CD8-positive, alpha-beta T cell (primary cell): ENCODE measurements at regions of chr17 and their contacts with region 1.

Region 1: DNA sequence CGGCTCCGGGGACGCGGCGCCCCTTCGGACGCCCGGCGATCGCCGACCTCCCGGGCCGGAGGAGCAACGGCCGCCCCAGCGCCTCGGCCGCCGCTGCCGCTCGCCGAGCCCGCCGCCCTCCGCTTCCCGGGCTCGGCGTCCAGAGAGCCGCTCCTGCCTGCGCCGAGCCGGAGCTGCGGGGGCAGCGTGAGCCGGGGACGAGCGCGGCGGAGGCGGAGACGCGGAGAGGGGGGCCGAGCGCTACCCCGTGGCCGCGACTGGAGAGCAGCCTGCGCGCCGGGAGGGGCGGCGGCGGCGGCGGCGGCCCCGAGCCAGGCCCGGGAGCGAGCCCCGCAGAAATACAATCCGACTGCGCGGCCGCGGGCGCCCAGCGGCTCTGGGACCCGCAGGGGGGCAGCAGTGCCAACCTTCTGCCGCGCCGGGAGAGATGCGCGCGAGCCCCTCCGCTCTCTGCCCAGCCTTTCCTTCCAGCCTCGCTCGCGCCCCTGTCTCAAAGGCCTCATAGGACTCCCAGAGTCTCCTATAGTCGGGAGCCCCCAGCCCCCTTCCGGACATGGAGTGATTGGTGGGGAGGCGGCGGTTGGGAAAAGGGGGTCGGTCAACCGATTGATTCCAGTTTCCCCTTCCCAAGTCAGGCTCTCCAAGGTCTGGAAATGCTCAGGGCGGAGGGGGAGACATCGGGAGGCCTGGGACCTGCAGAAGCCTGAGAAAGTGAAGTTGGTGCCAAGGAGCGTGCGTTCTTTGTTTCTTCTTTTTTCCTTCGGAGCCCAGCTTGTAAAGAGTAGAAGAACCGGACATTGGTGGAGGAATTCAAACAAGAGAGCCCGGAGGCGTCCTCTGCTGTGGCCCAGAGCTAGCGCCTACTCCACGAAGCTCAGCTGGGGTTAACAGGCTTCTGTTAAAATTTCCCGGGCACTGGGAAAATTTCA is 1.1 kb upstream of the SDK2 start:
- DNase-seq: peak in 7 of 9 experiments; percentile 14 to 78 (median 54)
- ATAC-seq: peak; percentile 55
- H3K4me3 ChIP-seq: peak overlapping the region in 1 of 2 experiments; percentile 27
- H3K4me3 Mint-ChIP-seq: peak overlapping the region; percentile 65
- H3K27ac ChIP-seq: no peak overlapping the region
- H3K27ac Mint-ChIP-seq: no peak overlapping the region
- H3K4me1 ChIP-seq: peaks cover 19% of the 10 kb centered on the region
- H3K4me1 Mint-ChIP-seq: peaks cover 30% of the 10 kb centered on the region
- H3K27me3 ChIP-seq: peaks cover 0 to 13% of the 10 kb centered on the region in 2 experiments
- H3K27me3 Mint-ChIP-seq: no peaks in the 10 kb centered on the region
- CTCF ChIP-seq: peak; percentile 26

Region 2: GRCh38 chr17:73710095-73710592 is 64.8 kb after region 1 on chr17:
- CTCF ChIA-PET with region 1: interaction called, 16 read pairs
- POLR2A ChIA-PET with region 1: no interaction called
- intact Hi-C with region 1: loop called in 1 of 2 experiments (anchors 5 kb)
- DNase-seq: peak; percentile 37 to 80 (median 67)
- ATAC-seq: peak; percentile 78
- H3K4me3 ChIP-seq: no peak overlapping the region
- H3K4me3 Mint-ChIP-seq: no peak overlapping the region
- H3K27ac ChIP-seq: no peak overlapping the region
- H3K27ac Mint-ChIP-seq: no peak overlapping the region
- H3K4me1 ChIP-seq: peaks cover 6% of the 10 kb centered on the region
- H3K4me1 Mint-ChIP-seq: peaks cover 12% of the 10 kb centered on the region
- H3K27me3 ChIP-seq: no peaks in the 10 kb centered on the region
- H3K27me3 Mint-ChIP-seq: no peaks in the 10 kb centered on the region
- CTCF ChIP-seq: peak; percentile 82

Region 3: DNA sequence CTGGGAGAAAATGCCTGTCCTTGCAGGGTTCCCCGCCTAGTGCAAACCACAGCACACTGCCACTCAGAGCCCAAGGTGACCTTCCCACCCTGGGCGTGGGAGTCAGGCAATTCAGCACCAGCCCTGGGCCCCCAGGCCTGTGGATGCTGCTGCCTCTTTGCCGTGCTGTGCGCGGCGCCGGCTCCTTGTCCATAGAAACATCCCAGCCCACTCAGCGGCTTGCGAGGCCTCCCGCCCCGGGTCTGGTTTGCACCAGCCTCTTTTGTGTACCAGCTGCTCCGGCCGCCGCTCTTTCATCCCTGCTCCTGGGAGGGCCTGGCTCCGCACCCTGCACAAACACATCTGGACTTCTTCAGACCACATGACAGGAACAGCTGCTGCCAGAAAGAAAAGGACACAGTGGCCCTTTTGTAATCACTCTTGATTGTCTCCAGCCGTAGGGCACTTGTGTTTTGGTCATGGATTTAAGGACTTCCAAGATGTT is 74.3 kb after region 1 on chr17:
- CTCF ChIA-PET with region 1: interaction called, 23 read pairs
- POLR2A ChIA-PET with region 1: interaction called, 3 read pairs
- intact Hi-C with region 1: loop called (anchors 5 kb)
- DNase-seq: no peak
- ATAC-seq: no peak
- H3K4me3 ChIP-seq: no peak overlapping the region
- H3K4me3 Mint-ChIP-seq: peak overlapping the region; percentile 35
- H3K27ac ChIP-seq: no peak overlapping the region
- H3K27ac Mint-ChIP-seq: peak overlapping the region; percentile 89
- H3K4me1 ChIP-seq: peaks cover 48% of the 10 kb centered on the region
- H3K4me1 Mint-ChIP-seq: peaks cover 48% of the 10 kb centered on the region
- H3K27me3 ChIP-seq: no peaks in the 10 kb centered on the region
- H3K27me3 Mint-ChIP-seq: no peaks in the 10 kb centered on the region
- CTCF ChIP-seq: no peak

Region 4: GRCh38 chr17:73841431-73842060 is 196.2 kb after region 1 on chr17:
- CTCF ChIA-PET with region 1: interaction called, 20 read pairs
- POLR2A ChIA-PET with region 1: no interaction called
- intact Hi-C with region 1: loop called (anchors 5 kb)
- DNase-seq: peak in 2 of 9 experiments; percentile 30 to 56
- ATAC-seq: peak; percentile 51
- H3K4me3 ChIP-seq: no peak overlapping the region
- H3K4me3 Mint-ChIP-seq: no peak overlapping the region
- H3K27ac ChIP-seq: no peak overlapping the region
- H3K27ac Mint-ChIP-seq: no peak overlapping the region
- H3K4me1 ChIP-seq: no peaks in the 10 kb centered on the region
- H3K4me1 Mint-ChIP-seq: peaks cover 3% of the 10 kb centered on the region
- H3K27me3 ChIP-seq: no peaks in the 10 kb centered on the region
- H3K27me3 Mint-ChIP-seq: no peaks in the 10 kb centered on the region
- CTCF ChIP-seq: peak; percentile 18

Region 5: DNA sequence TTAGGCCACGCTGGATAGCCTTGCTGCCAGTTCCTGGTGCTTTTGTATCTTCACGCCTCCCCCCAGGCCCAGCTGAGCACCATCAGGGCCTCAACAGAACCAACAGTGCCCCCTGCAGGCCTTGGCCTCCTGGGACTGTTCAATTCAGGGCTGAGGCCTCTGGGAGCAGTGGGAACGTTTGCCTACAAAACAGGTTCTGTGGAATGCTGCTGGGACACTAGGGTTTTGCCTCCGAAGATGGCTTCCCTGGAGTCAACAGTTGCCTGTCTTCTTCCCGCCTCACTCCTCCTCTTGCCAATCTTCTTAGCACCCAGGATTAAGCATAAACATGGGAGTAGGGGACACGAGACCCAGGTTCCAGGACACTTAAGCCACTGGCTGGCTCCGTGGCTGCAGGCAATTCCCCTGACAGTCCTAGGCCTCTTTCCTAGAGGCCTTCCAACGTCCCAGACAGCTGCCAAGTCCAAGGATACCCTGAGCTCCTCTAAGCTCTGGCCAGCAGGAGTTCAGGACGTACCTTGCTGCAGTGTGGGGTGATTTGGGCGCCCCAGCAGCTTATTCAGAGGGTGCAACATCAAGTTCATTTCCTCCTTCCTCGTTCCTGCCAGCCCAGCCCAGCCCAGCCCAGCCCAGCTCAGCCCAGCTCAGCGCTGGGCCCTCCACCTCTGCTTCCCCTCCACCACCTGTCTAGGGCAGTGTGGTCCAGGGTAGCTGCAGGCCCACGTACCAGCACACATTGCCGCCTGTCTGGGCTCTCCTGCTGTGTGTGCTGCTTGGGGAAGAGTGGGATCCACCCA is 311.6 kb after region 1 on chr17:
- CTCF ChIA-PET with region 1: interaction called, 10 read pairs
- POLR2A ChIA-PET with region 1: no interaction called
- intact Hi-C with region 1: loop called (anchors 2 to 5 kb)
- DNase-seq: peak; percentile 13 to 77 (median 53)
- ATAC-seq: peak; percentile 54
- H3K4me3 ChIP-seq: no peak overlapping the region
- H3K4me3 Mint-ChIP-seq: no peak overlapping the region
- H3K27ac ChIP-seq: no peak overlapping the region
- H3K27ac Mint-ChIP-seq: no peak overlapping the region
- H3K4me1 ChIP-seq: peaks cover 4% of the 10 kb centered on the region
- H3K4me1 Mint-ChIP-seq: peaks cover 3% of the 10 kb centered on the region
- H3K27me3 ChIP-seq: peaks cover 9 to 23% of the 10 kb centered on the region in 2 experiments
- H3K27me3 Mint-ChIP-seq: peaks cover 3% of the 10 kb centered on the region
- CTCF ChIP-seq: peak; percentile 35

Region 6: DNA sequence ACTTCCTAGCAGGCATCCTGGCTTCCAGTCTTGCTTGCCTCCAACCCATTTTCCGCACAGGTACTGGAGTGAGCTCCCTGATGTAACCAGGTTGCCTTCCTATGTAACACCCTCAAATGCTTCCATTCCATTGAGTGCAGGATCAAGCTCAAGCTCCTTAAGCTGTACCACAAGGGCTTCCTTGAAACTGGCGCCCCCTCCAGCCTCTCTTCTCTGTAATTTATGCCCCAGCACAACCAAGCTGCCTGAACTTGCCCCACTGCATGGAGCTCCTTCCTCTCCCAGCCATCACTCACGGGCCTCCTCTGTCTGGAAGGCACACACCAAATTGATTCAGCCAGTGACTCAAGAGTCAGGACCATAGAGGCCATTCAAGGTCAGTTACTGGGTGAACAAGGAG is 323.4 kb after region 1 on chr17:
- CTCF ChIA-PET with region 1: no interaction called
- POLR2A ChIA-PET with region 1: no interaction called
- intact Hi-C with region 1: no loop called
- DNase-seq: no peak
- ATAC-seq: no peak
- H3K4me3 ChIP-seq: no peak overlapping the region
- H3K4me3 Mint-ChIP-seq: no peak overlapping the region
- H3K27ac ChIP-seq: no peak overlapping the region
- H3K27ac Mint-ChIP-seq: no peak overlapping the region
- H3K4me1 ChIP-seq: no peaks in the 10 kb centered on the region
- H3K4me1 Mint-ChIP-seq: no peaks in the 10 kb centered on the region
- H3K27me3 ChIP-seq: peaks cover 0 to 4% of the 10 kb centered on the region in 2 experiments
- H3K27me3 Mint-ChIP-seq: peaks cover 27% of the 10 kb centered on the region
- CTCF ChIP-seq: no peak

Region 7: GRCh38 chr17:73998653-73999645 is 353.6 kb after region 1 on chr17:
- CTCF ChIA-PET with region 1: interaction called, 20 read pairs
- POLR2A ChIA-PET with region 1: interaction called, 3 read pairs
- intact Hi-C with region 1: loop called in 1 of 2 experiments (anchors 2 kb)
- DNase-seq: peak; percentile 25 to 79 (median 59)
- ATAC-seq: peak; percentile 52
- H3K4me3 ChIP-seq: no peak overlapping the region
- H3K4me3 Mint-ChIP-seq: no peak overlapping the region
- H3K27ac ChIP-seq: no peak overlapping the region
- H3K27ac Mint-ChIP-seq: no peak overlapping the region
- H3K4me1 ChIP-seq: no peaks in the 10 kb centered on the region
- H3K4me1 Mint-ChIP-seq: no peaks in the 10 kb centered on the region
- H3K27me3 ChIP-seq: peaks cover 0 to 3% of the 10 kb centered on the region in 2 experiments
- H3K27me3 Mint-ChIP-seq: peaks cover 11% of the 10 kb centered on the region
- CTCF ChIP-seq: peak; percentile 73